A549 (cell line): ENCODE measurements at regions of chr20 and their contacts with region 1.

Region 1: DNA sequence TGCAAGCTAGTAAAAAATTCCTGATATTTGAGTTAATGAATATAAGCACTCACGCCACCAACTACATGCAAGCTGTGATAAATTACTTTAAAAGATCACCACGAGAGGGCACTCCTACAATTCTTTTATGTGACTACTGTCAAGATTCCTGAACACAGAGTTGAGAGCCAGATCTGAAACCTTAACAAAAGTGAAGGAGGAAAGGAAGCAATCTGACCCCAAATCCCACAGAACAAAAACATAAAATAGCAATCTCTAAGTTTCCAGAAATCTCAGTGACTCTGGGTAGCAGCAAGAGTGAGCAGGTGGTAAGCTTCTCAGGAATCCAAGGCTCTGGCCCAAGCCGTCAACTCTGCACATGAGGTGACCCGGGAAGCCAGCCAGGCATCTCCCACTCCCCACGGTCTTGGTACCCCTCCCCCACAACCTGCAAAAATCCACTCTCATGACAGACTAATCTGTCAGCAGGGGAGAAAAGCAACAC is 55.1 kb downstream of the STAU1 start:
- DNase-seq: peak; percentile 57 to 73
- ATAC-seq: peak; percentile 75 to 89
- H3K4me3 ChIP-seq: no peak overlapping the region
- H3K27ac ChIP-seq: no peak overlapping the region
- H3K4me1 ChIP-seq: no peaks in the 10 kb centered on the region
- CTCF ChIP-seq: peak; percentile 81
- EP300 ChIP-seq: no peak
- POLR2A ChIP-seq: no peak
- RAD21 ChIP-seq: peak; percentile 73 to 74

Region 2: DNA sequence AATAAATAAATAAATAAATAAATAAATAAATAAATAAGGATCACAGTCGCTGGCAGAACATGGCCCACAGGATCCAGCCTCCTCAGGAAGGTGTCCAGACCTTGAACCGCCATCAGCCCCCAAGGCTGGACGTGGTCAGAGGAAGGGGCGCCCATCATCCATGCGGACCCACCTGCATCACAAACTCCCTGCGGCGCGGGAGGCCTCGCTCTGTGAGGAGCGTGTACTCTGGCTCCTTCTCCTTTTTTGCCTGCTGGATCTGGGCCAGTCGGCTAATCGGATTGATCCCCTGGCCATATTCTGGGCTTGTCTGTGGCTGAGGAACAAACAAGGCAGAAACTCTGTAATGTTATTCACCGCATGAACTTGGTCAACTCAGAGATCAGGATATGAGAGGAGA is 10.1 kb before region 1 on chr20:
- CTCF ChIA-PET with region 1: interaction called, 25 read pairs
- POLR2A ChIA-PET with region 1: no interaction called
- DNase-seq: no peak
- ATAC-seq: no peak
- H3K4me3 ChIP-seq: no peak overlapping the region
- H3K27ac ChIP-seq: no peak overlapping the region
- H3K4me1 ChIP-seq: no peaks in the 10 kb centered on the region
- CTCF ChIP-seq: no peak
- EP300 ChIP-seq: no peak
- POLR2A ChIP-seq: no peak
- RAD21 ChIP-seq: no peak

Region 3: DNA sequence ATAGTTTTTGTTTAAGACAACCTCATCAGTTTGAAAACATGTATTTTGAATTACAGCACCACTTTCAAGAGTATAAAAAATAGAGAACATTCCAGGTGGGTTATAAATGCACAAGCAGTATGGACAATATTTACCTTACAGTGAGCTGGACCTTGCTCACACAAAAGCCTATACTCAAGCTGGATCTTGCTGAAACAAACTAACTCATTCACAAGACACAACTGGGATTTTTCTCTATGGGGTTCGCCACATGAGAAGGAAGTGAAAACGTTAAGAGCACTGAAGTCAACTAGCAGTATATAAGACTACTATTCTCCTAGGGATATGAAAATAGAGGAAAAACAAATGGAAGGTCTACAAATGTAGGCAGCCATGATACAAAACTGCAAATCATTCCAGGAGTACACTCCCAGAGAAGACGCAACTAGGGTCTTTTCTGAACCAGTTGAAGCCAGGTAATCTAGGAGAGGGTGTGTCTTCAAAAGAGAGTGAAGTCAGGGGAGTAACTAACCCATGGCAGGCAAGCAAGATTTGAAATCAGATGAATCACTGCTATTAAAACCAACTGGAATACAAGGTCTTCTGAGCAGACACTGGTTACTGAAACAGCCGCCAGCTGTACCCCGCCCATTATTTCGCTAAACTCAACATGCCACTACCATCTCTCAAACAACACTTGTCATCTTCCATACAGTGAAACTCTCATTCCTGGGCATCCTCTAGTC is 28.6 kb after region 1 on chr20:
- CTCF ChIA-PET with region 1: interaction called, 14 read pairs
- POLR2A ChIA-PET with region 1: no interaction called
- DNase-seq: no peak
- ATAC-seq: no peak
- H3K4me3 ChIP-seq: no peak overlapping the region
- H3K27ac ChIP-seq: no peak overlapping the region
- H3K4me1 ChIP-seq: peaks cover 3% of the 10 kb centered on the region; the same call in 1 of the 3 replicates
- CTCF ChIP-seq: no peak
- EP300 ChIP-seq: no peak
- POLR2A ChIP-seq: no peak
- RAD21 ChIP-seq: no peak

Region 4: GRCh38 chr20:49186535-49187329 is 53.7 kb after region 1 on chr20:
- CTCF ChIA-PET with region 1: interaction called, 28 read pairs
- POLR2A ChIA-PET with region 1: no interaction called
- DNase-seq: peak; percentile 44 to 52
- ATAC-seq: peak; percentile 26 to 30; a peak in 5 of 6 replicates
- H3K4me3 ChIP-seq: peak overlapping the region; percentile 93
- H3K27ac ChIP-seq: peak overlapping the region; percentile 98 to 99
- H3K4me1 ChIP-seq: peaks cover 40% of the 10 kb centered on the region
- CTCF ChIP-seq: no peak
- EP300 ChIP-seq: no peak
- POLR2A ChIP-seq: no peak
- RAD21 ChIP-seq: no peak

Region 5: GRCh38 chr20:49323622-49324238 is 190.7 kb after region 1 on chr20:
- CTCF ChIA-PET with region 1: interaction called, 3 read pairs
- POLR2A ChIA-PET with region 1: interaction called, 10 read pairs
- DNase-seq: peak in 1 of 2 experiments; percentile 47
- ATAC-seq: peak; percentile 58 to 68
- H3K4me3 ChIP-seq: no peak overlapping the region
- H3K27ac ChIP-seq: no peak overlapping the region
- H3K4me1 ChIP-seq: peaks cover 4% of the 10 kb centered on the region; the same call in 1 of the 3 replicates
- CTCF ChIP-seq: no peak
- EP300 ChIP-seq: no peak
- POLR2A ChIP-seq: no peak
- RAD21 ChIP-seq: peak; percentile 33 to 44; a peak in 2 of 5 replicates

Region 6: DNA sequence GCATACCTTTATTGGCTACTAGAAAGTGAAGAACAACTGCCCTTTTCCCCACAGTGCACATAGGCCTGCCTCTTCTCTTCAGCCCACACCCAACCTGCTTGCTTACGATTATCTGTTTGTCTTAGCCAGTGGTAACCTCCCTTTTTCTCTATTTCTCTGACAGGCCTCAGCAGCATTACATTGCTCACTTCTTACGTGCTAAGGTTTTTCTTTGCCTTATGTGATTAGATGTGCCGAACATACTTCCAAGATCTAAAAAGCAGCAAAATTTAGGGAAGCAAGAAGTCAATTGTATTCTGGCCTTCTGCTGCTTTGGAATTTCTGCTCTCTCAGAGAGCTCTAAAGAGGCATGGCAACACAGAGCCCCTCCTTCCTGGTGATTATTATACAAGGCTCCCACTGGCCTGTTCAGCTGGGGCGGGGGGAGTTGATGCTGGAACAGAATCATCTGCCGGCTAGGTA is 573.6 kb after region 1 on chr20:
- CTCF ChIA-PET with region 1: no interaction called
- POLR2A ChIA-PET with region 1: no interaction called
- DNase-seq: peak; percentile 42 to 58
- ATAC-seq: peak; percentile 70 to 78
- H3K4me3 ChIP-seq: peak overlapping the region; percentile 4; the same call in 2 of the 3 replicates
- H3K27ac ChIP-seq: peak overlapping the region; percentile 69 to 98
- H3K4me1 ChIP-seq: peaks cover 95% of the 10 kb centered on the region
- CTCF ChIP-seq: no peak
- EP300 ChIP-seq: no peak
- POLR2A ChIP-seq: no peak
- RAD21 ChIP-seq: 0 out of 5 replicates have a peak, but pooled peaks of 1 of the 2 experiments have one; percentile 4